Activated T-helper 2 cell treated with anti-CD3 and anti-CD28 coated beads, Interferon-gamma antibody, Interleukin-2, Interleukin-4, amounts not matched to agents 10 μg/mL and 5 μg/mL and 100 μg/mL, durations not matched to agents 14 hours and 24 hours and 36 hours (primary cell): ENCODE measurements at regions of chr3 and their contacts with region 1.

Region 1: DNA sequence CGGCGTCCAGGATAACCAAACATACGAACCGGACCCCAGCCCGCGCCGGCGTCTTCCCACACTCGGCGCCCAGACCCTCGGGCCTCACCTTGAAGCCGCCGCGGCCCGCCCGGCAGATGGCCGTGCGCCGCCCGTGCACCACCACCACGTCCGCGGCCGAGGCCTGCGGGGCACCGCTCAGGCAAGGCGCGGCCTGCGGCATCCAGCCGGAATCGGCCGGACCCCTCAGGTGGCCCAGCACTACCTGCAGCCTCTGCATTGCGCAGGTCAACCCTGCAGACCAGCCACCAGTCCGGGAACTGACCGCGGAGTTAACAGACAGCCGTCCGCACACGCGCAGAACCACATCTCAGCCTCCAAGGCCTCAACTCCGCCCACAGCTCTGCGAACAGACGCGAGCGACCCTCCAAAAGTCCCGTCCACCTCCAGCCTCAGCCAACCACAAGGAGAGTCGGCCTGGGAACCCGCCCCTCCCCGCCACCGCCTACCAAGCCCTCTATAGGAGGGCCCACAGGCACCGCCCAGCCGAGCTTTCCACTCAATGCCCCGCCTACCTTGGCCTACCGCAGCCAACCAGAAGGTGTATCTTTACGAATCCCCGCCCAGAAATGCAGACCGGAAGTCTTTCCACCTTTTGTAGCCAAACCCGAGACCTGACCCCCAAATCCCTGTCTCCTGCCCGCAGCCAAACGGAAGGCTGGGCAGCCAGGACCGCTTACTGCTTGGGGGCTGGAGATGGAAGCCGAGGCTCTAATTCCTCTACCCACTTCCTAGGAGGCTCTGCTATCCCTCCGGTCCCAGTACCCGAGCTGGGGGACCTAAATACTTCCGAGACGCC is at the start of gene ACAA1:
- DNase-seq: peak; percentile 96
- H3K4me3 Mint-ChIP-seq: peak within 1 kb of the TSS; percentile 85
- H3K27ac Mint-ChIP-seq: peak within 1 kb of the TSS; percentile 98
- H3K4me1 Mint-ChIP-seq: peaks cover 50% of the 10 kb centered on the region
- H3K27me3 Mint-ChIP-seq: no peaks in the 10 kb centered on the region
- total RNA-seq, gene ACAA1: 68.6 and 69.5 TPM in 2 replicates

Region 2: DNA sequence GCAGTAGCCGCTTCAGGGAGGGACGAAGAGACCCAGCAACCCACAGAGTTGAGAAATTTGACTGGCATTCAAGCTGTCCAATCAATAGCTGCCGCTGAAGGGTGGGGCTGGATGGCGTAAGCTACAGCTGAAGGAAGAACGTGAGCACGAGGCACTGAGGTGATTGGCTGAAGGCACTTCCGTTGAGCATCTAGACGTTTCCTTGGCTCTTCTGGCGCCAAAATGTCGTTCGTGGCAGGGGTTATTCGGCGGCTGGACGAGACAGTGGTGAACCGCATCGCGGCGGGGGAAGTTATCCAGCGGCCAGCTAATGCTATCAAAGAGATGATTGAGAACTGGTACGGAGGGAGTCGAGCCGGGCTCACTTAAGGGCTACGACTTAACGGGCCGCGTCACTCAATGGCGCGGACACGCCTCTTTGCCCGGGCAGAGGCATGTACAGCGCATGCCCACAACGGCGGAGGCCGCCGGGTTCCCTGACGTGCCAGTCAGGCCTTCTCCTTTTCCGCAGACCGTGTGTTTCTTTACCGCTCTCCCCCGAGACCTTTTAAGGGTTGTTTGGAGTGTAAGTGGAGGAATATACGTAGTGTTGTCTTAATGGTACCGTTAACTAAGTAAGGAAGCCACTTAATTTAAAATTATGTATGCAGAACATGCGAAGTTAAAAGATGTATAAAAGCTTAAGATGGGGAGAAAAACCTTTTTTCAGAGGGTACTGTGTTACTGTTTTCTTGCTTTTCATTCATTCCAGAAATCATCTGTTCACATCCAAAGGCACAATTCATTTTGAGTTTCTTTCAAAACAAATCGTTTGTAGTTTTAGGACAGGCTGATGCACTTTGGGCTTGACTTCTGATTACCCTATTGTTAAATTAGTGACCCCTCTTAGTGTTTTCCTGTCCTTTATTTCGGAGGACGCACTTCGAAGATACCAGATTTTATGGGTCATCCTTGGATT is 1143.4 kb before region 1 on chr3 and contains the start of gene MLH1:
- intact Hi-C with region 1: loop called (anchors 5 kb)
- DNase-seq: peak; percentile 90
- H3K4me3 Mint-ChIP-seq: no peak within 1 kb of the TSS
- H3K27ac Mint-ChIP-seq: no peak within 1 kb of the TSS
- H3K4me1 Mint-ChIP-seq: peaks cover 37% of the 10 kb centered on the region
- H3K27me3 Mint-ChIP-seq: no peaks in the 10 kb centered on the region
- total RNA-seq, gene MLH1: 61.9 and 64.4 TPM in 2 replicates

Region 3: DNA sequence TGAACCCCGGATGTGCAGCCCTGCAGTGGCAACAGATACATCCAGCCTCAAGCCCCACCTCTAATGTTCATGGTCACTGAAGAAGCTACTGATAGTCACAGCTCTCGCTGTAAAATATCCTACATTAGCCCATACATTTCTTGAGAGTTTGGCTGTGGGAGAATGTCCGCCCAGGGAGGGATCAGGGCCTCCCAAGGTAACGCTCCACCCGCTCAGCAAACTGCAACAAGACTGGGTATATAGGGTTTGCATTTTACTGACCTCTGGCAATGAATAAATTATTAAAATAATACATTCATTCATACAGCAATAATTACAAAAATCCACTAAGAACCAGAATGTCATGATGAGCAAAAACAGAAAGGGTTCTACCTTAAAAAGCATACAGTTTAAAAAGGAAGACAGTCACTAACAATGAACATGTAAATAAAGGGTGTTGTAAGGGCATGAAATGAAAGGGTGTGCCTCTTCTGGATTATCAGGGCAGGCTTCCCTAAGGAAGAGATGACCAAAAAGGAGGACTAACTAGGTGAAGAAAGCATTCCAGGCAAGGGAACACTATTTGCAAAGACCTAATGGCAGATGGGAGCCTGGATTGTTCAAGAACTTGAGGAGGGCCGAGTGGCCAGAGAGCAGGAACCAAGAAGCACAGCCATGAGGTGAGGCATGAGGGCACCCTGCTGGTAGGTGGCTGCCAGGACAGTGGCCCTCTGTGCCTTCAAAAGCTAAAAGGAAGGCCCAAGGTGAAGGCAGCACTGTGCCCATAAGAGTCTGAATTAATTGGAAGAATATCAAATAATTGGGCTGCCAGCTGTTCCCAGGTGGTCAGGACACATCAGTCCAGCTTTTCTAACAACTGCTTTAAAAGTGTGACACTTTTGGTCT is 303.5 kb before region 1 on chr3:
- intact Hi-C with region 1: no loop called
- DNase-seq: no peak
- H3K4me3 Mint-ChIP-seq: no peak overlapping the region
- H3K27ac Mint-ChIP-seq: no peak overlapping the region
- H3K4me1 Mint-ChIP-seq: no peaks in the 10 kb centered on the region
- H3K27me3 Mint-ChIP-seq: peaks cover 5% of the 10 kb centered on the region

Region 4: DNA sequence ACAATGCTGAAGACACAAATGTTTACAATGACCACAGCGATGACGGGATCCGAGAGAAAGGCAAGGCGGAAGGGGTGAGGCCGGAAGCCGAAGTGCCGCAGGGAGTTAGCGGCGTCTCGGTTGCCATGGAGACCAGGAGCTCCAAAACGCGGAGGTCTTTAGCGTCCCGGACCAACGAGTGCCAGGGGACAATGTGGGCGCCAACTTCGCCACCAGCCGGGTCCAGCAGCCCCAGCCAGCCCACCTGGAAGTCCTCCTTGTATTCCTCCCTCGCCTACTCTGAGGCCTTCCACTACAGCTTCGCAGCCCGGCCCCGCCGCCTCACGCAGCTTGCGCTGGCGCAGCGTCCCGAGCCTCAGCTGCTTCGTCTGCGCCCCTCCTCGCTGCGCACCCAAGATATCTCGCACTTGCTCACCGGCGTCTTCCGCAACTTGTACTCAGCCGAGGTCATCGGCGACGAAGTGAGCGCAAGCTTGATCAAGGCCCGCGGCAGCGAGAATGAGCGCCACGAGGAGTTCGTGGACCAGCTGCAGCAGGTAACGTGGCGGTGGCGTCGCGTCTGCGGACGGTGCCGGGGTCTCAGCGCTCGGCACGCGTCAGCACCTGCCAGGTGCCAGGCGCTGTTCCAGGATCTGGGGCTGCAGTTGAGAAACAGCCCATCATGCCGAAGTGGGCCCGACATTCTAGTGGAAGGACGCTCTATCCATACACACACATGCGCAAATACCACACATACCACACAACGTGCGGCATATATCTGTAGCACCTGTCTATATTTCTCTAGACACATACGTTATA is 97.7 kb before region 1 on chr3 and contains the start of gene DLEC1:
- intact Hi-C with region 1: loop called (anchors 1 kb)
- DNase-seq: peak; percentile 86
- H3K4me3 Mint-ChIP-seq: peak within 1 kb of the TSS; percentile 66
- H3K27ac Mint-ChIP-seq: peak within 1 kb of the TSS; percentile 95
- H3K4me1 Mint-ChIP-seq: peaks cover 32% of the 10 kb centered on the region
- H3K27me3 Mint-ChIP-seq: peaks cover 7% of the 10 kb centered on the region
- total RNA-seq, gene DLEC1: 0.02 and 0.16 TPM in 2 replicates

Region 5: DNA sequence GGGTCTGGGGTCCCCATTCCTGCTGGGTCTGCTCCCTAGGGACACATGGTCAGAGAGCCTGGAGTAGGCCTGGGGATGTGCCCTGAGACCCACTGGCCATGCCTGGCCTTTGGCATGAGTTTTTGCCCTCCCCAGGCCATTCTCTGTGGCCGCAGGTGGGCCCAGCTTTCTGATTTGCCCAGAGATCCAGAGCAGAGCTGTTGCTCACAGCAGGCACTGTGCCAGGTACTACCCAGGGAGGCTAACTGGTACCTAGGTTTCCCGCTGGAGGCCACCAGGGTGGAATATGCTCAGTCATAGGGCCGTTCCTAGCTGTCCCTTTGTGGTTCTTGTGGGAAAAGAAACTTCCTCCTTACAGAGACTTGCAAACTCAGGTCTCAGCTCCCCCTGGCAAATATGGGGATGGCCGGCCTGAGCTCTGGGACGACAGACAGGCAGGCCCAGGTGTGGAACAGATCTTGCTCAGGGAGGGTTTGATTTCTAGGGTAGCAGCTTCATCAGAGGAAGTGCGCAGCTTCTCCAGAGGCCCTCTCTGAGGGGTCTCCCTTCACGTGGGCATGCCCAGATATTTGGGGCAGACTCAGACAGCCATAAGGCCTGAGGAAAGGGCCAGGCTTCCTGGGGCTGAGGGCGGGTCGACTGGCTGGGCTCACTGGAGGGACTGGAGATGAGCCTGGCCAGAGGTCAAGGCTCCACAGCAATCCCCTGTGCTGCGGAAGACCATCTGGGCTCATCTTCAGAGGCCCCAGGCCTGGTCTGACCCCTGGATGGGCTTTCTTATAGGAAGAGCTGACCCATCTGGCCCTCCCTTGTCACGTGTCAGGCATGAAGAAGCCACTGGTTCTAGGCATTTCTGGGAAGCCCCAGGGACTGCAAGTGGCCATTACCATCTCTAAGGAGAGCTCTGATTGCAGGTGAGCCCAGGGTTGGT is 28.1 kb before region 1 on chr3:
- intact Hi-C with region 1: no loop called
- DNase-seq: no peak
- H3K4me3 Mint-ChIP-seq: no peak overlapping the region
- H3K27ac Mint-ChIP-seq: no peak overlapping the region
- H3K4me1 Mint-ChIP-seq: no peaks in the 10 kb centered on the region
- H3K27me3 Mint-ChIP-seq: peaks cover 9% of the 10 kb centered on the region

Region 6: DNA sequence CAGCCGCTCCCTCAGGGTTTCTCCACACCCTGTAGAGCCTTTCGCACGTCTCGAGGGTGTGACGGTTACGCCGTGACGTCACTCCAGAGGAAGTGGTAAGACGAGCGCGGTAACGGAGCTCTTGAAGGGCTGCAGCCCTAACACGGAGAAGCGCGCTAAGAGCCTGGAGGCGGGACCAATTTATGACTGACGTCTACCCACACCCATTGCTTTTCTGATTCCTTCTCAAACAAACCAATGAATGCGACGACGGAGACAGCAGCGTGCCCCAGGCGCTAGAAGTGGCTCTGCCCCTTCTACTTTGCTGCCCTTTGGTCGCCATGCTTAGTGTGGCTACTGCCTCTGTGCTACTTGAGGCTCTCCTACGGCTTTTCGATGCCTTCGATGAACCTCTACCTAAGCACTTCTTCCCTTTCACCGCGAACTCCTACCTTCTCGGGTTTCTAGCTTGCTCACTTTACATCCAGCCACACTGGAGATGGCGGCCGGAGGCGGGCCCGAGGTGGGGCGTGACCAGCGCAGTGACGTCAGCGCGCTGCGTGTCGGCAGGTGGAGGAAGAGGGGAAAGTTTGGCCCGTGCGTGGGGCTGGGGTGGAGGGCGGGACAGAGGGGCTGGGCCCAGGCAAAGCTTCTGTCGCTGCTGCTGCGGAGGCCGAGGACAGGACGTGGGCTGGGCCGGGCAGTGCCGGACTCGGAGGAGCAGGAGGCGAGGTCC is 28.1 kb after region 1 on chr3 and contains the start of gene OXSR1:
- intact Hi-C with region 1: loop called (anchors 1 kb)
- DNase-seq: peak; percentile 96
- H3K4me3 Mint-ChIP-seq: peak within 1 kb of the TSS; percentile 93
- H3K27ac Mint-ChIP-seq: peak within 1 kb of the TSS; percentile 99
- H3K4me1 Mint-ChIP-seq: peaks cover 44% of the 10 kb centered on the region
- H3K27me3 Mint-ChIP-seq: no peaks in the 10 kb centered on the region
- total RNA-seq, gene OXSR1: 62.2 and 65.8 TPM in 2 replicates

Region 7: GRCh38 chr3:38257583-38257982 is 120.6 kb after region 1 on chr3:
- intact Hi-C with region 1: loop called (anchors 5 kb)
- DNase-seq: no peak
- H3K4me3 Mint-ChIP-seq: no peak overlapping the region
- H3K27ac Mint-ChIP-seq: no peak overlapping the region
- H3K4me1 Mint-ChIP-seq: peaks cover 36% of the 10 kb centered on the region
- H3K27me3 Mint-ChIP-seq: no peaks in the 10 kb centered on the region

Region 8: GRCh38 chr3:38411591-38411990 is 274.6 kb after region 1 on chr3:
- intact Hi-C with region 1: no loop called
- DNase-seq: no peak
- H3K4me3 Mint-ChIP-seq: no peak overlapping the region
- H3K27ac Mint-ChIP-seq: no peak overlapping the region
- H3K4me1 Mint-ChIP-seq: no peaks in the 10 kb centered on the region
- H3K27me3 Mint-ChIP-seq: peaks cover 4% of the 10 kb centered on the region

Region 9: GRCh38 chr3:38453075-38453912 is 316.3 kb after region 1 on chr3 and contains the start of gene ACVR2B:
- intact Hi-C with region 1: loop called (anchors 1 kb)
- DNase-seq: peak; percentile 61
- H3K4me3 Mint-ChIP-seq: peak within 1 kb of the TSS; percentile 97
- H3K27ac Mint-ChIP-seq: peak within 1 kb of the TSS; percentile 86
- H3K4me1 Mint-ChIP-seq: peaks cover 18% of the 10 kb centered on the region
- H3K27me3 Mint-ChIP-seq: peaks cover 22% of the 10 kb centered on the region
- total RNA-seq, gene ACVR2B: 10.3 and 12.0 TPM in 2 replicates